HepG2 (cell line): ENCODE measurements at regions of chr3 and their contacts with region 1.

Region 1: GRCh38 chr3:94249585-94249984 is 186.7 kb downstream of the NSUN3 start:
- DNase-seq: peak; percentile 44
- ATAC-seq: peak; percentile 90
- H3K4me3 ChIP-seq: no peak overlapping the region
- H3K27ac ChIP-seq: no peak overlapping the region
- H3K4me1 ChIP-seq: 0 out of 2 replicates have a peak, but pooled peaks cover 10% of the 10 kb centered on the region
- H3K27me3 ChIP-seq: no peaks in the 10 kb centered on the region; a peak in 1 of 5 replicates
- CTCF ChIP-seq: peak; percentile 86
- EP300 ChIP-seq: no peak
- POLR2A ChIP-seq: no peak
- RAD21 ChIP-seq: peak; percentile 54; the same call in 1 of the 2 replicates

Region 2: DNA sequence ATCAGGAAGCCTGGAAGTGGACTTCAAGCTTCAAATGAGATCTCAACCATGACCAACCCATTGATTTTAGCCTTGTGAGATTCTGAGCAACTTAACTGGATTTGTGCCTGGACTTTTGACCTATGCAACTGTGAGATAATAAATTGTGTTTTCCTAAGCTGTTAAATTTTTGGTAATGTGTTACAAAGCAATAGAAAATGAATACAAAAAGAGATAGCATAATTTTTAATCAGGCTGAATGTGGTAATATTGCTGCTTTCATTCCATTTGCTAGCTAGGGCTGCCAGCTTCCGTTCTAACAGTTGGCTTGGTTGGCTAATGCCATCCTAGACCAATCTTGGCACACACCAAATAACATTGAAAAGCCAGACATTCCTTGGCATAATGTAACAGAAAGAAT is 288.1 kb before region 1 on chr3:
- CTCF ChIA-PET with region 1: no interaction called
- POLR2A ChIA-PET with region 1: no interaction called
- in situ Hi-C with region 1: no loop called
- intact Hi-C with region 1: no loop called
- DNase-seq: no peak
- ATAC-seq: no peak
- H3K4me3 ChIP-seq: no peak overlapping the region
- H3K27ac ChIP-seq: no peak overlapping the region
- H3K4me1 ChIP-seq: peaks cover 27% of the 10 kb centered on the region
- H3K27me3 ChIP-seq: no peaks in the 10 kb centered on the region
- CTCF ChIP-seq: no peak
- EP300 ChIP-seq: no peak
- POLR2A ChIP-seq: no peak
- RAD21 ChIP-seq: no peak

Region 3: DNA sequence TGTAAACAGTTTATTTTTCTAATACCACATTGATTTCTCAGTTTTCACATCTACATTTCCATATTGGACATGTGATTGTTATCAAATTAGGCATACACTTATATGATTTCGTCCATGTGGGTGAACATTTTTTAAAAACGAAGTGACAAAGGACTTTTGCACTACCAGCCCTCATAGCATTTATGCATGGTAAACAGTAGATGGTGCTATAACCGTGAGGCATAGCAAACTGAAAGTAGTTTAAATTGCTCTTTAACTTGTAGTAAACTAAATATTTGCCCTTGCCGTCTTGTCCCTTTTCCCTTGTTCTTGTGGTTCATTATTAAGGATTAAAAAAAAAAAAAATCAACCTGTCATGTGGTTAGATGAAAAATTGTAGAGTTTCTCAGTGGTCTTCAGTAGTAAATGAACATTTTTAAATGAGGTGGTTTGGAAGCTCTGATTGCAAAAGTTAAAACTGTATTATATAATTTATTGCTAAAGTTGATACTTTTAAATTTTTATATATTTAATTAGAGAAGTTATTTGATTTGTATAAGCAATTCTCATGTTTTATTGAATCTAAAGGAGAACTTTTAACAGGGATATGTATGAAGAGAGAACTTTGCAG is 245.2 kb before region 1 on chr3:
- CTCF ChIA-PET with region 1: no interaction called
- POLR2A ChIA-PET with region 1: no interaction called
- in situ Hi-C with region 1: no loop called
- intact Hi-C with region 1: loop called (anchors 10 kb)
- DNase-seq: peak; percentile 60
- ATAC-seq: peak; percentile 67
- H3K4me3 ChIP-seq: 0 out of 6 replicates have a peak overlapping the region, but pooled peaks of 1 of the 3 experiments have one; percentile 31
- H3K27ac ChIP-seq: peak overlapping the region; percentile 11
- H3K4me1 ChIP-seq: no peaks in the 10 kb centered on the region
- H3K27me3 ChIP-seq: no peaks in the 10 kb centered on the region
- CTCF ChIP-seq: peak; percentile 81
- EP300 ChIP-seq: no peak
- POLR2A ChIP-seq: no peak
- RAD21 ChIP-seq: no peak

Region 4: GRCh38 chr3:94137377-94137776 is 112.2 kb before region 1 on chr3:
- CTCF ChIA-PET with region 1: no interaction called
- POLR2A ChIA-PET with region 1: no interaction called
- in situ Hi-C with region 1: no loop called
- intact Hi-C with region 1: no loop called
- DNase-seq: no peak
- ATAC-seq: no peak
- H3K4me3 ChIP-seq: no peak overlapping the region
- H3K27ac ChIP-seq: no peak overlapping the region
- H3K4me1 ChIP-seq: no peaks in the 10 kb centered on the region
- H3K27me3 ChIP-seq: no peaks in the 10 kb centered on the region
- CTCF ChIP-seq: no peak
- EP300 ChIP-seq: no peak
- POLR2A ChIP-seq: no peak
- RAD21 ChIP-seq: no peak

Region 5: DNA sequence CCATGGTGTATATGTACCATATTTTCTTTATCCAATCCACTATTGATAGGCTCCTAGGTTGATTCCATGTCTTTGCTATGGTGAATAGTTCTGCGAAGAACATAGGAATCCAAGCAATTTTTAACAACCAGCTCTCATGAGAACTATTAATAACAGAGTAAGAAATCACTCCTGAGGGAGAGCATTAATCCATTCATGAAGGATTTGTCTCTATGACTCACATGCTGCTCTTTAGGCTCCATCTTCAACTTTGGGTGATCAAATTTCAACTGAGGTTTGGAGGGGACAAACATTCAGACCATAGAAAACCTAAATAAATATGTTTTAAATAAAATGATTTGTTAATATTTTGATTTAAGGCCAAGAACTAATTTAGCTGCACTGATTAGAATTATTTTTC is 39.3 kb before region 1 on chr3:
- CTCF ChIA-PET with region 1: no interaction called
- POLR2A ChIA-PET with region 1: no interaction called
- in situ Hi-C with region 1: no loop called
- intact Hi-C with region 1: loop called (anchors 2 kb)
- DNase-seq: no peak
- ATAC-seq: no peak
- H3K4me3 ChIP-seq: no peak overlapping the region
- H3K27ac ChIP-seq: no peak overlapping the region
- H3K4me1 ChIP-seq: no peaks in the 10 kb centered on the region
- H3K27me3 ChIP-seq: no peaks in the 10 kb centered on the region
- CTCF ChIP-seq: no peak
- EP300 ChIP-seq: no peak
- POLR2A ChIP-seq: no peak
- RAD21 ChIP-seq: no peak

Region 6: DNA sequence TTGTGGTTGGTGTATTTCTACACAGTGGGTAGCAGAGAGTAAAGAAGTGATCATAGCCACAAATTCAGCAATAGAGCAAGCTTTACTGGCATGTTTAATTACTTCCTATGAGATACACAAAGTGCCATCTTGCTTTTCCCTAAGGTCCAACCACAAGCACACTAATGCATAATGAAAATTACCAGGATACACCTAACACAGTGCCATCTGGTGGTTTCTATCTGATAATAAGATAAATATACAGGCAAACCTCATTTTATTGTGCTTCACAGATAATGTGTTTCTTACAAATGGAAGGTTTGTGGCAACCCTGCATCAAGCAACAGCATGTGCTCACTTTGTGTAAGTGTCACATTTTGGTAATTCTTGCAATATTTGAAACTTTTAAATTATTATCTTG is 36.3 kb after region 1 on chr3:
- CTCF ChIA-PET with region 1: no interaction called
- POLR2A ChIA-PET with region 1: no interaction called
- in situ Hi-C with region 1: no loop called
- intact Hi-C with region 1: loop called (anchors 1 kb)
- DNase-seq: no peak
- ATAC-seq: no peak
- H3K4me3 ChIP-seq: no peak overlapping the region
- H3K27ac ChIP-seq: no peak overlapping the region
- H3K4me1 ChIP-seq: no peaks in the 10 kb centered on the region
- H3K27me3 ChIP-seq: no peaks in the 10 kb centered on the region
- CTCF ChIP-seq: no peak
- EP300 ChIP-seq: no peak
- POLR2A ChIP-seq: no peak
- RAD21 ChIP-seq: no peak

Region 7: GRCh38 chr3:94317017-94317416 is 67.4 kb after region 1 on chr3:
- CTCF ChIA-PET with region 1: no interaction called
- POLR2A ChIA-PET with region 1: no interaction called
- in situ Hi-C with region 1: no loop called
- intact Hi-C with region 1: no loop called
- DNase-seq: no peak
- ATAC-seq: no peak
- H3K4me3 ChIP-seq: no peak overlapping the region
- H3K27ac ChIP-seq: no peak overlapping the region
- H3K4me1 ChIP-seq: no peaks in the 10 kb centered on the region
- H3K27me3 ChIP-seq: no peaks in the 10 kb centered on the region; a peak in 1 of 5 replicates
- CTCF ChIP-seq: no peak
- EP300 ChIP-seq: no peak
- POLR2A ChIP-seq: no peak
- RAD21 ChIP-seq: no peak

Region 8: DNA sequence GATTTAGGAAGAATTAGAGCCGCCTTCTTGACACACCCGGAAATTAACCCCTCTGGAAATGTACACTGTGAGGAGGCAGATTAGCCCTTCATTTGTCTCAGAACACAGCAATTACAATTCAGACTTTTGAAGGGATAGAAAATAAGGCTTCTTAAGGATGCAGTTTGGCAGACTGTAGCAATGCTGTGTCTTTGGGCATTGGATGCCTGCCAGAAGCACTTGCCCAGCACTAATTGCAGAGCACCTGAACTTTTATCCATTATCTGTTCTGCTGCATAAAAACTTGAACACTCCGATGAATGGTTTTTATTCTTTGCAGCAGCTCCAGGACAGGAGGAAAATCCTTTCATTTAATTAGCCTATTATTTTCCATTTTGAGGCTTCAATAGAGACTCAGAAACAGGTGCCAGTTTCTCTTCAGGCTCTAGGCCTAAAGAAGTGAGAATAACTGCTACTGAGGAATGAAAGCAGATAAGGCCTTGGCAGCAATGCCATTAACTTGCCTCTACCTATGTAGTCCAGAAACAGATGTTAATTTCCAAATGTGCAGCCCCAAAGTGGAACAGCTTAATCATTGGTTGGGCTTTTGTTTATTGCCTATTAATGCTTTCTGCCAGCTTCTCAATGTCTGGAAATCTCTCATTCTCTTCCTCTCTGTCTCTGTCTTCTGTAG is 231.8 kb after region 1 on chr3:
- CTCF ChIA-PET with region 1: no interaction called
- POLR2A ChIA-PET with region 1: no interaction called
- in situ Hi-C with region 1: no loop called
- intact Hi-C with region 1: no loop called
- DNase-seq: no peak
- ATAC-seq: no peak
- H3K4me3 ChIP-seq: no peak overlapping the region
- H3K27ac ChIP-seq: no peak overlapping the region
- H3K4me1 ChIP-seq: no peaks in the 10 kb centered on the region
- H3K27me3 ChIP-seq: no peaks in the 10 kb centered on the region
- CTCF ChIP-seq: no peak
- EP300 ChIP-seq: no peak
- POLR2A ChIP-seq: no peak
- RAD21 ChIP-seq: no peak

Region 9: DNA sequence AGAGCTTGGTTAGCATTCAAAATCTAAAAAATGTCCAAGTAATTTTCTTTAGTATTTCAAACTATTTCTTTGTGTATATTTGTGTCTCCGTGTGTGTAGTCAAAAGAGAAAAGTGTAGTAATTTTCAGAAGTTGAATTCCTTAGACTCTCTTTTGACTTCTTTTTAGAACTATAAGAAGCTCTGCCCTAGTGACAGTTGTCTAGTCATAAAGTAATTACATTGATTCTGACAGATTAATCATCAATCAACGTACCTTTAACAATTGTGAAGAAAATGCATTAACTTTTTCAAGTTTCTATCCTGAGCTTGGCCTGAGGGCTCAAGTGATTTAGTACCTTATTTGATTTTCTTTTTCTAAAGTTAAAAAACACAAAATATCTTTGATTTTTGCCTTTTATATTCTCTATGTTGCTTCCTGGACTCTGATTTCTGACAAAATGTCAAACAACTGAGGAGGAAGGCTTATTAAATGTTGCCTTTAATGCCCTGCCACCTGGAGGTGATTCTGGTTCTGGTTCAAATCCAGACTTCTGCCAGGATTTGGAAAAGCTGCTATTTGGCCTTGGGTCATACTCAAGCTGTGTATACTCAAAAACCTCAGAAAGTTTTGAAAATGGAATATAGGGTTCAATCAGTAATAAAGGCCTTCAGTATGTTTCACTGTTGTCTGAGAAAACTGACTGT is 466.9 kb after region 1 on chr3:
- CTCF ChIA-PET with region 1: interaction called, 8 read pairs
- POLR2A ChIA-PET with region 1: no interaction called
- in situ Hi-C with region 1: no loop called
- intact Hi-C with region 1: loop called (anchors 1 kb)
- DNase-seq: peak; percentile 24
- ATAC-seq: peak; percentile 47; the same call in 2 of the 3 replicates
- H3K4me3 ChIP-seq: no peak overlapping the region
- H3K27ac ChIP-seq: no peak overlapping the region
- H3K4me1 ChIP-seq: no peaks in the 10 kb centered on the region
- H3K27me3 ChIP-seq: no peaks in the 10 kb centered on the region
- CTCF ChIP-seq: peak; percentile 48
- EP300 ChIP-seq: no peak
- POLR2A ChIP-seq: no peak
- RAD21 ChIP-seq: no peak

Region 10: GRCh38 chr3:95184038-95184437 is 934.5 kb after region 1 on chr3:
- CTCF ChIA-PET with region 1: no interaction called
- POLR2A ChIA-PET with region 1: no interaction called
- in situ Hi-C with region 1: no loop called
- intact Hi-C with region 1: loop called (anchors 5 kb)
- DNase-seq: peak; percentile 2
- ATAC-seq: no peak
- H3K4me3 ChIP-seq: no peak overlapping the region
- H3K27ac ChIP-seq: no peak overlapping the region
- H3K4me1 ChIP-seq: no peaks in the 10 kb centered on the region
- H3K27me3 ChIP-seq: no peaks in the 10 kb centered on the region
- CTCF ChIP-seq: peak; percentile 41
- EP300 ChIP-seq: no peak
- POLR2A ChIP-seq: no peak
- RAD21 ChIP-seq: no peak